ENCODE measurements at regions of chr6 and their contacts with region 1.

Region 1: DNA sequence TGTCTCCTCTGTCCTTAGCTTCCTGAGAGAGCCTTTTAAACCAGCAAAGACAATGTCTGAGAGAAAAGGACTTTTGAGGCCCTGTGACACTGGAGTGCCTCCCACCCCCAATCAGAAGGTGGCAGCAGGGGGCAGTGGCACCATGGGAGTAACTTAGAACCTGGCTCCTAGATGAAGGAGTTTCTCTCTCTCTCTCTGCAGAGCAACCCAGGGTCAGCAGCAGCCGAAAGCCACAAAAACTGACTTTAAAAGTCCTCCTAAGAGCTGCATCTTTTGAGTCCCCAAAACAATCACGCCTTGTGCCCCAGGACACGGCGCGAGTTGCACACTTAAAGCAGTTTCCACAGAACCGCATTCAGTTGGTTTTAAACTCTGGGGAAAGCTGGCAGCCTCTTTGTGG is 5.3 kb upstream of the TCP11 start:
- DNase-seq: peak; percentile 41 to 67 (median 62)
- ATAC-seq: peak; percentile 74 to 81
- H3K4me3 ChIP-seq: no peak overlapping the region
- H3K27ac ChIP-seq: no peak overlapping the region
- H3K4me1 ChIP-seq: no peaks in the 10 kb centered on the region
- H3K27me3 ChIP-seq: no peaks in the 10 kb centered on the region

Region 2: GRCh38 chr6:35202066-35202546 is 55.7 kb after region 1 on chr6:
- intact Hi-C with region 1: loop called (anchors 2 to 10 kb)
- DNase-seq: no peak
- ATAC-seq: peak in 1 of 2 donors; percentile 49
- H3K4me3 ChIP-seq: no peak overlapping the region
- H3K27ac ChIP-seq: no peak overlapping the region
- H3K4me1 ChIP-seq: peaks cover 9% of the 10 kb centered on the region
- H3K27me3 ChIP-seq: no peaks in the 10 kb centered on the region

Region 3: DNA sequence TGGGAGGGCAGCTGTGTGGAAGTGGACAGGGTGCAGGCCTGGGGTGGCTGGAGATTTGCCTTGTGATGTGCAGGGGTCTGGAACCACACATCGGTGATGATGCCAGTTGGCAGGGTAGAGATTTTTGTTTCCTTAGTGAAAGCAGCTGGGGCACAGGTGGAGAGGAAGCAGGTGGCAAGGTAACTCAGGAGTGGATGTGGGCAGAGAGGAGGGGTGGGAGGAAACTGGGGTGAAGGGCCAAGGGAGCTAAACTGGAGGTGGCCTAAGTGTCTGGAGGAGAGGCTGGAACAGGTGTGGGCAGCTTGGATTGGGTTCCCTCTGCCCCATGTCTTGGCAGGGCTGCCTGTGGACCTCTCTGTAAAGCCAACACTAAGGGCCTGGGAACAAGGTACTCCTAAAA is 62.6 kb after region 1 on chr6:
- intact Hi-C with region 1: loop called (anchors 2 to 10 kb)
- DNase-seq: no peak
- ATAC-seq: no peak
- H3K4me3 ChIP-seq: no peak overlapping the region
- H3K27ac ChIP-seq: no peak overlapping the region
- H3K4me1 ChIP-seq: no peaks in the 10 kb centered on the region
- H3K27me3 ChIP-seq: no peaks in the 10 kb centered on the region

Region 4: DNA sequence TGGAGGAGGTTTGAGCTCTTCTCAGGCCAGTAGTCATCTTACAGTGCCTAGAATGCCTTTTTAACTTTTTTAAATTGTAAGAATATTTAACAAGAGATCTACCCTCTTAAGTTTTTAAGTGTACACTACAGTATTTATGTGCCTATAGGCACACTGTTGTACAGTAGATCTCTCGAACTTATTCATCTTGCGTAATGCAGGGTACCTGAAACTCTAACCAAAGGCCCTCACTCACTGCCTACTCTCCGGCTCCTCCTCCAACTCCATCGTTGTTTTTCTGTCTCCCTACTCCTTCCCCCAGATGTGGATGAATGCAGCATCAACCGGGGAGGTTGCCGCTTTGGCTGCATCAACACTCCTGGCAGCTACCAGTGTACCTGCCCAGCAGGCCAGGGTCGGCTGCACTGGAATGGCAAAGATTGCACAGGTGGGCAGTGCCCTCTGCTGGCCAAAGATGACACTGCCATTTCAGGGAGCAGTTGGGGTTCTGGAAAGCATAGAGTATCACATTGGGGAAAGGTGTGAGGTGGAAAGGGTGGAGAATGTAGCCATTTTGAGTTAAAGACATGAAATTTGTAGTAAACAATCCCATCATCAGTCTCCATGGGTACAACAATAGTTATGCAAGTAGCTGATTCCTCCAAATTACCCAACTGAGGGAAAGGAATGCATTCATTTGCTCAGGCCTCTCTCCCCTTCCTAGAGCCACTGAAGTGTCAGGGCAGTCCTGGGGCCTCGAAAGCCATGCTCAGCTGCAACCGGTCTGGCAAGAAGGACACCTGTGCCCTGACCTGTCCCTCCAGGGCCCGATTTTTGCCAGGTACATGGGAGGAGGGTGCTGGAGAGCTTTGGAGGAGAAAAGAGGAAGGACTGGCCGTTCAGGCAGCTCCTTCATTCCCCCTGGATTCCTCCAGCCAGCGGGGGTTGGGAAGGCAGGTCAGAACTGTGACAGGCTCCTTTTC is 94.7 kb after region 1 on chr6:
- intact Hi-C with region 1: loop called in 3 of 4 experiments (anchors 2 to 10 kb)
- DNase-seq: peak; percentile 61 to 85 (median 85)
- ATAC-seq: peak; percentile 30 to 61
- H3K4me3 ChIP-seq: no peak overlapping the region
- H3K27ac ChIP-seq: no peak overlapping the region
- H3K4me1 ChIP-seq: peaks cover 6% of the 10 kb centered on the region
- H3K27me3 ChIP-seq: no peaks in the 10 kb centered on the region

Region 5: GRCh38 chr6:35287671-35288396 is 141.4 kb after region 1 on chr6:
- intact Hi-C with region 1: no loop called
- DNase-seq: no peak
- ATAC-seq: peak in 1 of 2 donors; percentile 16
- H3K4me3 ChIP-seq: no peak overlapping the region
- H3K27ac ChIP-seq: no peak overlapping the region
- H3K4me1 ChIP-seq: no peaks in the 10 kb centered on the region
- H3K27me3 ChIP-seq: no peaks in the 10 kb centered on the region